ENCODE measurements at regions of chr14 and their contacts with region 1.

Region 1: DNA sequence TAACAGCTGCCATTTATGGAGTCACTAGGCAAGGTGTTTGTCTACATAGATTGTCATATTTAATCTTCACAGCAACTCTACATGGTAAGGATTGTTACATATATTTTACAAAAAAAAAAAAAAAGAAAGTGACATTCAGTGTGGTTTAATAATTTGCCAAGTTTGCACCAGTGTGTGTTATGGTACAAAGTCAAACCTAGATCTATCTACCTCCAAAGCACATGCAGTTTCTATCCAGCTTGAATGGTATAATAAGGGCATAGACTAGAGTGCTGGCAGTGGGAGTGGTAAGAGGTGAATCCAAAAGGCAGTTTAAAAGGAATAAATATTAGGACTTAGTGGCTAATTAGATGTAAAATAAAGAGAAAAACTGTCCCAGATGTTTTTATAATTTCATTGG is 66.2 kb upstream of the PCNX4 start:
- DNase-seq: no peak
- ATAC-seq: no peak
- H3K4me3 Mint-ChIP-seq: no peak overlapping the region
- H3K27ac Mint-ChIP-seq: no peak overlapping the region
- H3K4me1 Mint-ChIP-seq: no peaks in the 10 kb centered on the region
- H3K27me3 Mint-ChIP-seq: peaks cover 9% of the 10 kb centered on the region
- CTCF ChIP-seq: no peak

Region 2: DNA sequence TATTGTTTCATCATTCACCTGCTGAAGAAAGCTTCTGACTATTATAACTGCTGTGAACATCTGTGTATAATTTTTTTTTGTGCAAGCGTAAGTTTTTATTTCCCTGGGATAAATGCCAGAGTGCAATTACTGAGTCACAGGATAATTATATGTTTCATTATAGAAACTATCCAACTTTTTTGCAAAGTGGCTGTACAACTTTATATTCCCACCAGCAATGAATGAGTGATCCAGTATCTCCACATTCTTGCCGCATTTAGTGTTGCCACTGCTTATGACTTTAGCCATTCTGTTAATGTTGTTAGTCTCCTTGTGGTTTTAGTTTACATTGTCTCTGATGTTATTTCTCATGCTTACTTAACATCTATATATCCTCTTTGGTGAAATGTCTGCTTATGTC is 360.8 kb before region 1 on chr14:
- CTCF ChIA-PET with region 1: no interaction called
- POLR2A ChIA-PET with region 1: no interaction called
- intact Hi-C with region 1: no loop called
- DNase-seq: no peak
- ATAC-seq: no peak
- H3K4me3 Mint-ChIP-seq: no peak overlapping the region
- H3K27ac Mint-ChIP-seq: no peak overlapping the region
- H3K4me1 Mint-ChIP-seq: no peaks in the 10 kb centered on the region
- H3K27me3 Mint-ChIP-seq: no peaks in the 10 kb centered on the region
- CTCF ChIP-seq: no peak

Region 3: DNA sequence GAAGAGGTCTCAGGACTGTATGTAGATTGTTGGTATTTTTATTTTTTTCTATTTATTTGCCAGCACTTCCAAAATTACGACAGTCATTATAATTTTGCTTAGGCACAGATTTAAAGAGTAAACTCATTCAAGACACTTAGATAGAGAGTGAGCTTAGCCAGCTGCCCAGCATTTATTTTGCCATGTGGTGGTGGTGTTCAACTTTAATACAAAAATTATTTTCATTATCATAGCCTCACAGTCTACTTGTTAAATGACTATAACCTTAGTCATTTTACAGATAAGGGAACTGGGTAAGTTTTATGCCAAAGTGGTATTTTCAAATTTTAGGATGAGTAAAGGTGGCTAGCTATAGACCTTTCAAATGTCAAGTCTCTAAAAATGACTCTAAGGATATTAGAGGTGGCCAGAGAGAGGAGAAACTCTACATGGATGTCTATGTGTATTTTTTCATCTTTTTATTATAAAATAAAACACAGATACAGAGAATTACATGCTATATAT is 39.0 kb before region 1 on chr14:
- CTCF ChIA-PET with region 1: no interaction called
- POLR2A ChIA-PET with region 1: no interaction called
- intact Hi-C with region 1: loop called (anchors 2 kb)
- DNase-seq: no peak
- ATAC-seq: no peak
- H3K4me3 Mint-ChIP-seq: no peak overlapping the region
- H3K27ac Mint-ChIP-seq: no peak overlapping the region
- H3K4me1 Mint-ChIP-seq: no peaks in the 10 kb centered on the region
- H3K27me3 Mint-ChIP-seq: peaks cover 2% of the 10 kb centered on the region
- CTCF ChIP-seq: no peak

Region 4: GRCh38 chr14:59997449-59997848 is 28.1 kb before region 1 on chr14:
- CTCF ChIA-PET with region 1: no interaction called
- POLR2A ChIA-PET with region 1: no interaction called
- intact Hi-C with region 1: loop called (anchors 1 kb)
- DNase-seq: no peak
- ATAC-seq: no peak
- H3K4me3 Mint-ChIP-seq: no peak overlapping the region
- H3K27ac Mint-ChIP-seq: no peak overlapping the region
- H3K4me1 Mint-ChIP-seq: no peaks in the 10 kb centered on the region
- H3K27me3 Mint-ChIP-seq: peaks cover 7% of the 10 kb centered on the region
- CTCF ChIP-seq: no peak

Measured in activated B cell treated with CpG ODN at 0.5 μM for 24 hours (primary cell).